Activated B cell treated with CpG ODN at 0.5 μM for 24 hours (primary cell): ENCODE measurements at regions of chr2 and their contacts with region 1.

Region 1: DNA sequence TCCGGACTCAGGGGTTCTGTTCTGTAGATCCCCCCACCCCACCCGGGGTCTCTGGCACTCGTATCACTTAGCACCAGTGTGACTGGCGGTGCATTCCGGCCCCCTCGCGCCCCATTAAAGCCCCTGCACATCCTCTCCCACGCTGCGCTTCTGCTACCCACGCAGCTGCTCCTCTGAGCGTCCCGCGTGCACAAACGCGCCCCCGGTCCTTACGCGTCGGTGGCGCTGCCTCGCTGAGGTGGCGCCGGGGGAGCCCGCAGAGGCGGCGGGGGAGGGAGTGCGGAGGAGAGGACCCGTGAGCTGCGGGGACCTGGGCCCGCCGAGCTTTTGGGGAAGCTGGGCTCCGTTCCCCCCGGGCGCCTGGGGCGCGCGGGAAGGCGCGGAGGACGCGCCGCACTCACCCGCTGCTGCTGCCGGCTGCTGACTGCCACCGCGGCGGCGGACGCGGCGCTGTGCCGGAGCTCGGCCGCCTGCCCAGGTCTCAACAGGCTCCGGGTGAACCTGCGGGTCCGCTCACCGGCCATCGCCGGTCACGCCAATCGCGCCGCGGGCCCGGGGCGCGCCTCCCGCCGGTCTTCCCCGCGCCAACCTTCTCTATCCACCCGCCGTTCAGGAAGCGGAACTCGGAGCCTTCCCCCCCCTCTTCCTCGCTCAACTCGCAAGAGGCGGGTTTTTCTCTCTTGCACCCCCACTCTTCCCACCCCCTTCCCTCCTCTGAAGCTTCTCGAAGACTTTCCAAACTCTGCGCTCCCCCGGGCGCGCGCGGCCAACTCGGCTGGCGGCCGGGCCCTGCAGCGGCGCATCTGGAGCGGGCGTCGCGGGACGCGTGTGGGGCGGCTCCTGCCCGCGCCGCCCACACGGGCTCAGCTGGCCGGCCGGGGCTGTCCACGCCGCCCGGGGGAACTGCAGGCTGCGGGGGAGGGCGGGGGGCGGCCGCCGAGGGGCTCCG is at the start of gene DOCK10:
- DNase-seq: peak; percentile 63
- ATAC-seq: peak; percentile 43
- H3K4me3 Mint-ChIP-seq: peak within 1 kb of the TSS; percentile 96
- H3K27ac Mint-ChIP-seq: peak within 1 kb of the TSS; percentile 96
- H3K4me1 Mint-ChIP-seq: peaks cover 56% of the 10 kb centered on the region
- H3K27me3 Mint-ChIP-seq: no peaks in the 10 kb centered on the region
- CTCF ChIP-seq: no peak
- total RNA-seq, gene DOCK10: 159 and 172 TPM in 2 replicates

Region 2: GRCh38 chr2:223896833-223897311 is 1145.3 kb before region 1 on chr2:
- CTCF ChIA-PET with region 1: no interaction called
- POLR2A ChIA-PET with region 1: no interaction called
- intact Hi-C with region 1: loop called (anchors 5 kb)
- DNase-seq: peak; percentile 22
- ATAC-seq: peak; percentile 45
- H3K4me3 Mint-ChIP-seq: peak overlapping the region; percentile 67
- H3K27ac Mint-ChIP-seq: peak overlapping the region; percentile 99
- H3K4me1 Mint-ChIP-seq: peaks cover 74% of the 10 kb centered on the region
- H3K27me3 Mint-ChIP-seq: no peaks in the 10 kb centered on the region
- CTCF ChIP-seq: no peak

Region 3: GRCh38 chr2:224817676-224818075 is 224.4 kb before region 1 on chr2:
- CTCF ChIA-PET with region 1: no interaction called
- POLR2A ChIA-PET with region 1: interaction called, 10 read pairs
- intact Hi-C with region 1: no loop called
- DNase-seq: no peak
- ATAC-seq: no peak
- H3K4me3 Mint-ChIP-seq: no peak overlapping the region
- H3K27ac Mint-ChIP-seq: no peak overlapping the region
- H3K4me1 Mint-ChIP-seq: peaks cover 1% of the 10 kb centered on the region
- H3K27me3 Mint-ChIP-seq: no peaks in the 10 kb centered on the region
- CTCF ChIP-seq: no peak

Region 4: GRCh38 chr2:224973112-224974016 is 68.8 kb before region 1 on chr2:
- CTCF ChIA-PET with region 1: no interaction called
- POLR2A ChIA-PET with region 1: interaction called, 5 read pairs
- intact Hi-C with region 1: loop called (anchors 1 kb)
- DNase-seq: no peak
- ATAC-seq: peak; percentile 86
- H3K4me3 Mint-ChIP-seq: peak overlapping the region; percentile 69
- H3K27ac Mint-ChIP-seq: peak overlapping the region; percentile 92
- H3K4me1 Mint-ChIP-seq: peaks cover 83% of the 10 kb centered on the region
- H3K27me3 Mint-ChIP-seq: no peaks in the 10 kb centered on the region
- CTCF ChIP-seq: no peak

Region 5: GRCh38 chr2:224983712-224984554 is 58.2 kb before region 1 on chr2:
- CTCF ChIA-PET with region 1: no interaction called
- POLR2A ChIA-PET with region 1: no interaction called
- intact Hi-C with region 1: no loop called
- DNase-seq: no peak
- ATAC-seq: no peak
- H3K4me3 Mint-ChIP-seq: peak overlapping the region; percentile 75
- H3K27ac Mint-ChIP-seq: peak overlapping the region; percentile 76
- H3K4me1 Mint-ChIP-seq: peaks cover 50% of the 10 kb centered on the region
- H3K27me3 Mint-ChIP-seq: no peaks in the 10 kb centered on the region
- CTCF ChIP-seq: no peak

Region 6: GRCh38 chr2:225025917-225026571 is 16.1 kb before region 1 on chr2:
- CTCF ChIA-PET with region 1: no interaction called
- POLR2A ChIA-PET with region 1: interaction called, 12 read pairs
- intact Hi-C with region 1: loop called (anchors 1 kb)
- DNase-seq: no peak
- ATAC-seq: peak; percentile 47
- H3K4me3 Mint-ChIP-seq: peak overlapping the region; percentile 39
- H3K27ac Mint-ChIP-seq: peak overlapping the region; percentile 39
- H3K4me1 Mint-ChIP-seq: peaks cover 46% of the 10 kb centered on the region
- H3K27me3 Mint-ChIP-seq: no peaks in the 10 kb centered on the region
- CTCF ChIP-seq: no peak

Region 7: DNA sequence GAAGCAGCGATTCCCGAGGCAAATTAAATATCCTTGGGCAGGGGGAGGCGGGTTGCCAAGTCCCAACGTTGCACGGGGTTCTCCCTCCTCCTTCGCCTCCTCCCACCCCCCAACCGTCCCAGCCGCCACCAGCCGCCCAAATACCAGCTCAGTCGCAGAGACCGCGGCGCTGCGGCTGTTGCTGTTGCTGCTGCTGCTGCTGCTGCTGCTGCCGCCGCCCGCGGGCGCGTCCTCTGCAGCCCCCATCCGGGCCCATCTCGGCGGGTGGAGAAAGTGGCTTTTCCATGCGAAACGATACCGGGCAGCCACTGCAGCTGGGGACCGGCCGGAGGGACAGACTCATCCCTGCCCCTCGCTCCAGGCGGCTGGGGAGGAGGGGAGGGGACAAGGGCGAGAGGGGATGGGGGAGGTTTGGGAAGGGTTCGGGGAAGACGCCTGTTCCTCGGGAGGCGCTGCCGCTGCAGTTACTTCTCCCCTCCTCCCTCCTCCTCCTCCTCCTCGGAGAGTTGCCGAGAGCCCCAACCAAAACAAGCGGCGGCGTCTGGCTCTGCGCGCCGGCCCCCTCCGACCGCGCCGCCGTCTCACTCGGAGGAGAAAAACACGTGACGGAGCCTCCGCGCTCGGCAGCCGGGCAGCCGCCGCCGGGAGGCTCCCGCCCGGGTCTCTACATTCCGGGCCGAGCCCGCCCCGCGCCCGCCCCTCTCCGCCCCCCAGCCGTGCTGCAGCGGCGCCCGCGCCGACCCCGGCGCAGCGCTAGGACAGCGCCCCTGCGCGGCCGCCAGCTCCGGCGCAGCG is 1757.3 kb after region 1 on chr2 and contains the start of gene IRS1:
- CTCF ChIA-PET with region 1: no interaction called
- POLR2A ChIA-PET with region 1: no interaction called
- intact Hi-C with region 1: loop called (anchors 5 kb)
- DNase-seq: peak; percentile 59
- ATAC-seq: peak; percentile 47
- H3K4me3 Mint-ChIP-seq: peak within 1 kb of the TSS; percentile 92
- H3K27ac Mint-ChIP-seq: peak within 1 kb of the TSS; percentile 77
- H3K4me1 Mint-ChIP-seq: peaks cover 38% of the 10 kb centered on the region
- H3K27me3 Mint-ChIP-seq: peaks cover under 1% of the 10 kb centered on the region
- CTCF ChIP-seq: no peak
- total RNA-seq, gene IRS1: 3.2 and 3.6 TPM in 2 replicates